CD8-positive, alpha-beta memory T cell (primary cell): ENCODE measurements at regions of chr7 and their contacts with region 1.

Region 1: GRCh38 chr7:143240291-143241168 is 18.7 kb downstream of the TAS2R40 start:
- DNase-seq: peak; percentile 44 to 81 (median 68)
- H3K4me3 ChIP-seq: no peak overlapping the region
- H3K4me3 Mint-ChIP-seq: peak overlapping the region in 2 of 7 donors; percentile 36 to 41
- H3K27ac ChIP-seq: no peak overlapping the region
- H3K27ac Mint-ChIP-seq: peak overlapping the region in 4 of 8 donors; percentile 36 to 61 (median 46)
- H3K4me1 ChIP-seq: peaks cover 21% of the 10 kb centered on the region
- H3K4me1 Mint-ChIP-seq: peaks cover 27 to 39% (median 34%) of the 10 kb centered on the region in 3 donors
- H3K27me3 ChIP-seq: no peaks in the 10 kb centered on the region
- H3K27me3 Mint-ChIP-seq: peaks cover 14 to 22% of the 10 kb centered on the region in 2 donors

Region 2: GRCh38 chr7:143050931-143051330 is 189.6 kb before region 1 on chr7:
- CTCF ChIA-PET with region 1: no interaction called
- POLR2A ChIA-PET with region 1: no interaction called
- DNase-seq: no peak
- H3K4me3 ChIP-seq: no peak overlapping the region
- H3K4me3 Mint-ChIP-seq: no peak overlapping the region
- H3K27ac ChIP-seq: no peak overlapping the region
- H3K27ac Mint-ChIP-seq: peak overlapping the region in 1 of 8 donors; percentile 21
- H3K4me1 ChIP-seq: no peaks in the 10 kb centered on the region
- H3K4me1 Mint-ChIP-seq: no peaks in the 10 kb centered on the region
- H3K27me3 ChIP-seq: no peaks in the 10 kb centered on the region
- H3K27me3 Mint-ChIP-seq: peaks cover 11 to 38% of the 10 kb centered on the region in 2 donors

Region 3: GRCh38 chr7:143214789-143215679 is 25.5 kb before region 1 on chr7:
- CTCF ChIA-PET with region 1: interaction called, 10 read pairs
- POLR2A ChIA-PET with region 1: no interaction called
- DNase-seq: peak; percentile 25 to 73 (median 68)
- H3K4me3 ChIP-seq: no peak overlapping the region
- H3K4me3 Mint-ChIP-seq: no peak overlapping the region
- H3K27ac ChIP-seq: no peak overlapping the region
- H3K27ac Mint-ChIP-seq: peak overlapping the region in 1 of 8 donors; percentile 15
- H3K4me1 ChIP-seq: no peaks in the 10 kb centered on the region
- H3K4me1 Mint-ChIP-seq: no peaks in the 10 kb centered on the region
- H3K27me3 ChIP-seq: no peaks in the 10 kb centered on the region
- H3K27me3 Mint-ChIP-seq: peaks cover 0 to 10% of the 10 kb centered on the region in 2 donors

Region 4: DNA sequence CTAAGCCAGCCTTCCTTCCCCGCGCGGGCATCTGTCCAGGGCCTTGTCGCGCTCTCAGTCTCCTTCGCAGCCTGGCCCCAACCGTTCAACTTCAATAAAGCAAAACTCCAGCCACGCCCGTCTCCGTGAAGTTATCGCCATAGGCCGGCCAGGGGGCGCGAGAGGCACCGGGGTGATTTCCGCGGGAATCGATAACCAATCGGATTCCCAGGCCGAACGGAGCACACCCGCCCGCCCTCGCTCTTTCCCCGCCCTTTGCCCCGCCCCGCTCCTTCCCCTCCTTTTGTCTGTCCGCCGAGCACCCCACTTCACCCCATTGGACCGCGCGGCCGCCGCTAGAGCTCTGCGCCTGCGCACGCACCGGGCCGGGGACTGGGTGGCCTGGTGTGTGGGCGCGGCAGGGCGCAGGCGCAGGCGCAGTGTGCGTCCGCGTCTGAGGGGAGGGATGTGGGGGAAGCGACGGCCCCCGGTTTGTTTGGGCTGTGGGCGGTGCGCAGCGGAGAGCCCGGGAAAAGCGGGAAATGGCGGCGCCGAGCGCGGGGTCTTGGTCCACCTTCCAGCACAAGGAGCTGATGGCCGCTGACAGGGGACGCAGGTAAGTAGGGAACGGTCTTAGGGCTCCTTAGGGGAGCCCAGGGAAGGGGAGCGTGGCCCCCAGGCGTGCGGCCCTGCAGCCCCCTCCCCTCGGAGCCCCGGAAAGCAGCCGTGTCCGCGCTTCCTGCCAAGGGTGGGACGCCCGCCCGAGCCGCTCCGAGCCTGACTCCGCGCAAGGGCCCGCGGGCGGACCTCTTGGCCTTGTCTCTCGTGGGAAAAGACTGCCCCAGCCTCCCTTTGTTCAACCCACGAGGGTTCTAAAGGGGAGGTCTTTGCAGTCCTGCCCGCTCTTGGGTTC is 47.7 kb after region 1 on chr7 and contains the start of gene CASP2:
- CTCF ChIA-PET with region 1: interaction called, 24 read pairs
- POLR2A ChIA-PET with region 1: interaction called, 9 read pairs
- DNase-seq: peak; percentile 98 to 100 (median 99)
- H3K4me3 ChIP-seq: peak within 1 kb of the TSS; percentile 59
- H3K4me3 Mint-ChIP-seq: peak within 1 kb of the TSS; percentile 88 to 99 (median 95)
- H3K27ac ChIP-seq: peak within 1 kb of the TSS; percentile 83
- H3K27ac Mint-ChIP-seq: peak within 1 kb of the TSS; percentile 85 to 99 (median 91)
- H3K4me1 ChIP-seq: peaks cover 29% of the 10 kb centered on the region
- H3K4me1 Mint-ChIP-seq: peaks cover 50 to 68% (median 61%) of the 10 kb centered on the region in 3 donors
- H3K27me3 ChIP-seq: no peaks in the 10 kb centered on the region
- H3K27me3 Mint-ChIP-seq: no peaks in the 10 kb centered on the region
- total RNA-seq, gene CASP2: 105 to 107 TPM

Region 5: GRCh38 chr7:143334244-143334643 is 93.7 kb after region 1 on chr7:
- CTCF ChIA-PET with region 1: interaction called, 11 read pairs
- POLR2A ChIA-PET with region 1: no interaction called
- DNase-seq: no peak
- H3K4me3 ChIP-seq: no peak overlapping the region
- H3K4me3 Mint-ChIP-seq: no peak overlapping the region
- H3K27ac ChIP-seq: no peak overlapping the region
- H3K27ac Mint-ChIP-seq: no peak overlapping the region
- H3K4me1 ChIP-seq: no peaks in the 10 kb centered on the region
- H3K4me1 Mint-ChIP-seq: peaks cover 0 to 2% (median 0%) of the 10 kb centered on the region in 3 donors
- H3K27me3 ChIP-seq: peaks cover 8% of the 10 kb centered on the region
- H3K27me3 Mint-ChIP-seq: peaks cover 11 to 36% of the 10 kb centered on the region in 2 donors

Region 6: DNA sequence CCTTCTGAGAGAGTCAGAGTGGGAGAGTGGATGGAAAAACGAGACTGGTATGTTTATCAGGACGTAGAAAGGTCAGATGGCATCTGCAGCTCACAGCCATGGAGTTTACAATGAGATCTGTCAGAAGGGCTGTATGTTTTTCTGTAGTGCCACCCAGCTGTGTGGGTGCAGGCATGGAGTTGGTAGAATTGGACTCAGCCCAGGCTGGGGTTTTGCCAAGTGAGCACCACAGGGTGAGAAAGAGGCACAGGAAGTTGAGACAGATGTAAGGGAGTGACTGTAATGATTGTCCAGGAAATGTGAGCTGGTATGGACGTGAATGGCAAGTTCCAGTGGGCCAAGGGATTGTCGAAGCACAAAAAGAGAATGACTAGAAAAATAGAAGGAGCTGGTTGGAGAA is 131.5 kb after region 1 on chr7:
- CTCF ChIA-PET with region 1: interaction called, 19 read pairs
- POLR2A ChIA-PET with region 1: no interaction called
- DNase-seq: peak in 4 of 5 donors; percentile 19 to 76 (median 50)
- H3K4me3 ChIP-seq: no peak overlapping the region
- H3K4me3 Mint-ChIP-seq: peak overlapping the region in 6 of 7 donors; percentile 5 to 76 (median 41)
- H3K27ac ChIP-seq: no peak overlapping the region
- H3K27ac Mint-ChIP-seq: peak overlapping the region; percentile 15 to 93 (median 87)
- H3K4me1 ChIP-seq: peaks cover 39% of the 10 kb centered on the region
- H3K4me1 Mint-ChIP-seq: peaks cover 56 to 60% (median 58%) of the 10 kb centered on the region in 3 donors
- H3K27me3 ChIP-seq: no peaks in the 10 kb centered on the region
- H3K27me3 Mint-ChIP-seq: no peaks in the 10 kb centered on the region

Region 7: GRCh38 chr7:143416565-143417149 is 176.1 kb after region 1 on chr7:
- CTCF ChIA-PET with region 1: interaction called, 67 read pairs
- POLR2A ChIA-PET with region 1: no interaction called
- DNase-seq: peak in 2 of 5 donors; percentile 49 to 56
- H3K4me3 ChIP-seq: no peak overlapping the region
- H3K4me3 Mint-ChIP-seq: no peak overlapping the region
- H3K27ac ChIP-seq: no peak overlapping the region
- H3K27ac Mint-ChIP-seq: no peak overlapping the region
- H3K4me1 ChIP-seq: no peaks in the 10 kb centered on the region
- H3K4me1 Mint-ChIP-seq: peaks cover 0 to 5% (median 4%) of the 10 kb centered on the region in 3 donors
- H3K27me3 ChIP-seq: no peaks in the 10 kb centered on the region
- H3K27me3 Mint-ChIP-seq: peaks cover 13 to 18% of the 10 kb centered on the region in 2 donors